ENCODE measurements at regions of chr12 and their contacts with region 1.

Region 1: GRCh38 chr12:109818905-109819500 is 14.2 kb downstream of the TRPV4 start:
- DNase-seq: peak; percentile 95
- H3K4me3 ChIP-seq: no peak overlapping the region
- H3K27ac ChIP-seq: peak overlapping the region; percentile 36
- H3K4me1 ChIP-seq: peaks cover 52% of the 10 kb centered on the region
- H3K27me3 ChIP-seq: no peaks in the 10 kb centered on the region
- CTCF ChIP-seq: no peak

Region 2: DNA sequence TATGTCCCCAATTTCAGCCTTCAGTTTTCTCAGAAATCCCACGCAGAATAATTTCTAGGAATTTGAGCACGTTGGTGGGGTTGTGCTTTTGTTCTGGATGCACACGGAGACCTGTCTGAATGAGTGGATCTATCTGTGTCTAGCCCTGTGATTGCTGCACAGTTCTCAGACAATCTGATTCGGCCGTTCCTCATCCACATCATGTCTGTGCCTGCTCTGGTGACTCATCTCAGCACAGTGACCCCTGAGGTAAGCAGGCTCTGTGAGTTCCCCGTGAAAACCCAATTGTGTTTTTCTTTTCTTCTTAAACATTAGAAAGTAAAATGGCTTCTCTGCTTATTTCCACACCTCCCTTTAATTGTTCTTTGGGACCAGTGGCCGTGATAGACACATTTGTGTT is 321.3 kb before region 1 on chr12:
- CTCF ChIA-PET with region 1: no interaction called
- dilution Hi-C with region 1: no loop called
- in situ Hi-C with region 1: no loop called
- intact Hi-C with region 1: no loop called
- DNase-seq: peak; percentile 88
- H3K4me3 ChIP-seq: no peak overlapping the region
- H3K27ac ChIP-seq: peak overlapping the region; percentile 46
- H3K4me1 ChIP-seq: peaks cover 13% of the 10 kb centered on the region
- H3K27me3 ChIP-seq: no peaks in the 10 kb centered on the region
- CTCF ChIP-seq: no peak

Region 3: GRCh38 chr12:109782326-109782703 is 36.7 kb before region 1 on chr12:
- CTCF ChIA-PET with region 1: no interaction called
- dilution Hi-C with region 1: loop called (anchors 5 kb)
- in situ Hi-C with region 1: no loop called
- intact Hi-C with region 1: no loop called
- DNase-seq: no peak
- H3K4me3 ChIP-seq: no peak overlapping the region
- H3K27ac ChIP-seq: no peak overlapping the region
- H3K4me1 ChIP-seq: peaks cover 5% of the 10 kb centered on the region
- H3K27me3 ChIP-seq: no peaks in the 10 kb centered on the region
- CTCF ChIP-seq: no peak

Region 4: GRCh38 chr12:109844983-109845823 is 26.2 kb after region 1 on chr12:
- CTCF ChIA-PET with region 1: no interaction called
- dilution Hi-C with region 1: no loop called
- in situ Hi-C with region 1: no loop called
- intact Hi-C with region 1: loop called (anchors 1 kb)
- DNase-seq: peak; percentile 83
- H3K4me3 ChIP-seq: peak overlapping the region in 1 of 3 experiments; percentile 28
- H3K27ac ChIP-seq: no peak overlapping the region
- H3K4me1 ChIP-seq: peaks cover 14% of the 10 kb centered on the region
- H3K27me3 ChIP-seq: no peaks in the 10 kb centered on the region
- CTCF ChIP-seq: peak; percentile 82 to 99

Region 5: GRCh38 chr12:109858764-109859163 is 39.8 kb after region 1 on chr12:
- CTCF ChIA-PET with region 1: no interaction called
- dilution Hi-C with region 1: loop called (anchors 5 kb)
- in situ Hi-C with region 1: no loop called
- intact Hi-C with region 1: no loop called
- DNase-seq: no peak
- H3K4me3 ChIP-seq: no peak overlapping the region
- H3K27ac ChIP-seq: no peak overlapping the region
- H3K4me1 ChIP-seq: no peaks in the 10 kb centered on the region
- H3K27me3 ChIP-seq: no peaks in the 10 kb centered on the region
- CTCF ChIP-seq: no peak

Region 6: GRCh38 chr12:109899783-109900751 is 81.1 kb after region 1 on chr12 and contains the start of gene TCHP:
- CTCF ChIA-PET with region 1: no interaction called
- dilution Hi-C with region 1: loop called (anchors 10 kb)
- in situ Hi-C with region 1: no loop called
- intact Hi-C with region 1: no loop called
- DNase-seq: peak; percentile 85
- H3K4me3 ChIP-seq: peak within 1 kb of the TSS; percentile 45 to 70 (median 61)
- H3K27ac ChIP-seq: peak within 1 kb of the TSS; percentile 57
- H3K4me1 ChIP-seq: peaks cover 5% of the 10 kb centered on the region
- H3K27me3 ChIP-seq: no peaks in the 10 kb centered on the region
- CTCF ChIP-seq: peak; percentile 23 to 50
- total RNA-seq, gene TCHP: 4.0 to 19.4 TPM

Region 7: GRCh38 chr12:109934026-109934425 is 115.0 kb after region 1 on chr12:
- CTCF ChIA-PET with region 1: no interaction called
- dilution Hi-C with region 1: loop called (anchors 5 kb)
- in situ Hi-C with region 1: no loop called
- intact Hi-C with region 1: no loop called
- DNase-seq: no peak
- H3K4me3 ChIP-seq: no peak overlapping the region
- H3K27ac ChIP-seq: no peak overlapping the region
- H3K4me1 ChIP-seq: no peaks in the 10 kb centered on the region
- H3K27me3 ChIP-seq: no peaks in the 10 kb centered on the region
- CTCF ChIP-seq: peak; percentile 9 to 20